PC-3 (cell line): ENCODE measurements at regions of chr4 and their contacts with region 1.

Region 1: GRCh38 chr4:155766622-155767021 is 7.8 kb downstream of the GUCY1B1 start:
- DNase-seq: no peak
- ATAC-seq: no peak
- H3K4me3 ChIP-seq: no peak overlapping the region
- H3K27ac ChIP-seq: no peak overlapping the region
- H3K4me1 ChIP-seq: no peaks in the 10 kb centered on the region
- H3K27me3 ChIP-seq: no peaks in the 10 kb centered on the region
- CTCF ChIP-seq: no peak

Region 2: DNA sequence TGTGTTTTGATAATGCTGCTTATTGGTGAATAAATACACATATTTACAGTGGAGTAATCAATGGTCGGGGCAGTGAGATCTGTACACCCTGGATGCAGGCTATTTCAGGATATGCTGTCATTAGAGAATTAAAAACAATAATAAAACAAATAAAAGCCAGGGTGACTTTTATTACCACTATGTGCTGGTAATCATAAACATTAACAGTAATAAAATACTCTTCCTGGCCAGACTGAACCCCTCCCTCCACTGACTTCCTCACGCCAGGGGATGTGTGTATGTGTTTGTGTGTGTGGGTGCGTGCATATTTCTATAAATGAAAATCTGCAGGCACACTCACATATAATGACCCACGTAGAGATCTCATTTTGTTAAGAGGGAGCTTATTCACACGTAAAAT is 291.9 kb before region 1 on chr4:
- CTCF ChIA-PET with region 1: no interaction called
- POLR2A ChIA-PET with region 1: interaction called, 11 read pairs
- intact Hi-C with region 1: no loop called
- DNase-seq: no peak
- ATAC-seq: no peak
- H3K4me3 ChIP-seq: no peak overlapping the region
- H3K27ac ChIP-seq: no peak overlapping the region
- H3K4me1 ChIP-seq: peaks cover 12% of the 10 kb centered on the region
- H3K27me3 ChIP-seq: no peaks in the 10 kb centered on the region
- CTCF ChIP-seq: no peak